Ascending aorta (tissue), 2 donors: ENCODE measurements at regions of chr11 and their contacts with region 1.

Region 1: GRCh38 chr11:9506489-9507276 is 45.9 kb downstream of the ZNF143 start:
- DNase-seq: peak in 1 of 2 donors; percentile 83
- H3K4me3 ChIP-seq: no peak overlapping the region
- H3K27ac ChIP-seq: no peak overlapping the region
- H3K4me1 ChIP-seq: peaks cover 0 to 5% of the 10 kb centered on the region in 2 donors
- H3K27me3 ChIP-seq: no peaks in the 10 kb centered on the region
- CTCF ChIP-seq: peak; percentile 83 to 90 (median 90)

Region 2: DNA sequence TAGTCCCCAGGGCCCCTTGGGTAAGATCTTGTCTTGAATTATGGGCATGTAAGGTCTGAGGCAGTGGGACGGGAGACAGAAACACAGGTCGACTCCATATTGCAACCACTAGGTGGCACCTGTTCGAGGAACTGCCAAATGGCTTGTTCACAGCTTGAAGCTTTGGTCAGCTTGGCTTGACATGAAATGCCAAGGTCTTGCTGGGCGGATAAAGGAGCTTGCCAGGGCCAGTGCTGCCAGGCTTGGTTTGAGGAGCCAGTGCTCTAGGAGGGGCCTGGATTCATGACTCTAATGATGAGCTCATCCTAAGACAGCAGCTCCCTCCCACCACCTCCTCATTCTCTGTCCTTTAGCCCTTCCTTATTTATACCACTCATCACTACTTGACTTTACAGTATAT is 491.0 kb before region 1 on chr11:
- intact Hi-C with region 1: loop called (anchors 5 kb)
- DNase-seq: peak in 1 of 2 donors; percentile 79
- H3K4me3 ChIP-seq: no peak overlapping the region
- H3K27ac ChIP-seq: no peak overlapping the region
- H3K4me1 ChIP-seq: no peaks in the 10 kb centered on the region
- H3K27me3 ChIP-seq: no peaks in the 10 kb centered on the region
- CTCF ChIP-seq: peak; percentile 61 to 74 (median 63)

Region 3: GRCh38 chr11:9169595-9170295 is 336.9 kb before region 1 on chr11:
- intact Hi-C with region 1: loop called (anchors 5 kb)
- DNase-seq: no peak
- H3K4me3 ChIP-seq: no peak overlapping the region
- H3K27ac ChIP-seq: no peak overlapping the region
- H3K4me1 ChIP-seq: no peaks in the 10 kb centered on the region
- H3K27me3 ChIP-seq: no peaks in the 10 kb centered on the region
- CTCF ChIP-seq: no peak

Region 4: GRCh38 chr11:9601037-9601875 is 94.6 kb after region 1 on chr11:
- intact Hi-C with region 1: no loop called
- DNase-seq: no peak
- H3K4me3 ChIP-seq: no peak overlapping the region
- H3K27ac ChIP-seq: no peak overlapping the region
- H3K4me1 ChIP-seq: no peaks in the 10 kb centered on the region
- H3K27me3 ChIP-seq: no peaks in the 10 kb centered on the region
- CTCF ChIP-seq: no peak

Region 5: DNA sequence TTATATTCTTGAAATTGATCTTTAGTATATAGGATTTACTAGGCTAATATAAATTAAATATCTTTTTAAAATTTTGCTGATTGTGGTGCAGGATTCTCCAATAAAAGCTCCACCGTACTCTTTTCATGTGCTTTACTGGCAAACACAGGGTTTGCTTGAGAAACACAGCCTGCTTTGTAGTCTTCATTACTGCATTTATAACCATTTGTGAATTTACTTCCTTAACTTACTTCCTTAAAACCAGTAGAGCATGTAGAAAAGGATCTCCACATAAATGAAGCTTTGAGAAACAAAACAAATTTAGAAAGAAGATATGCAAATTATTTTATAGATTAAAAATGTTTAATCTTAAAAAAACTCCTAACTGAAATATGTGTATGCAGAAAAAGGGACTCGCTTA is 186.0 kb after region 1 on chr11:
- intact Hi-C with region 1: no loop called
- DNase-seq: no peak
- H3K4me3 ChIP-seq: no peak overlapping the region
- H3K27ac ChIP-seq: peak overlapping the region in 1 of 2 donors; percentile 34
- H3K4me1 ChIP-seq: peaks cover 10 to 34% of the 10 kb centered on the region in 2 donors
- H3K27me3 ChIP-seq: no peaks in the 10 kb centered on the region
- CTCF ChIP-seq: no peak